Colonic mucosa (tissue), 4 donors: ENCODE measurements at regions of chr5 and their contacts with region 1.

Region 1: DNA sequence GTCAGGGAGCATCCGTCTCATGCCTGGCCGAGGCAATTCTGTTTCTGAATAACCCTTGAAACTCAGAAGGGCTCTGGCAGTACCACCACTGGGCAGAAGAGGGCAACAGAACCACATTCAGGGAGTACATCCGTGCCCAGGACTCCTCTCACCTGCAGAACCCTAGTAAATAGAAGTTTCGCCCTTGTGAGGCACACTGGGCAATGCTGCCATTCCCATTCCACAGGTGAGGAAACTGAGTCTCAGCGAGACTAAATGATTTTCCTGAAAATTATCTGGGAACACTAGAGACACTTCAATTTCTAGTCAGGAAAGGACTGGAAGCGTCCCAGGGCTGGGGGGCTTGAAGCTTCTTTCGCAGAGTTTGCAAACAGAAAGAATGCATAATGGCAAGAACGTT is 74.7 kb downstream of the FGF1 start:
- DNase-seq: peak; percentile 75
- H3K4me3 ChIP-seq: no peak overlapping the region
- H3K27ac ChIP-seq: no peak overlapping the region
- H3K4me1 ChIP-seq: no peaks in the 10 kb centered on the region
- H3K27me3 ChIP-seq: no peaks in the 10 kb centered on the region
- CTCF ChIP-seq: peak; percentile 79

Region 2: DNA sequence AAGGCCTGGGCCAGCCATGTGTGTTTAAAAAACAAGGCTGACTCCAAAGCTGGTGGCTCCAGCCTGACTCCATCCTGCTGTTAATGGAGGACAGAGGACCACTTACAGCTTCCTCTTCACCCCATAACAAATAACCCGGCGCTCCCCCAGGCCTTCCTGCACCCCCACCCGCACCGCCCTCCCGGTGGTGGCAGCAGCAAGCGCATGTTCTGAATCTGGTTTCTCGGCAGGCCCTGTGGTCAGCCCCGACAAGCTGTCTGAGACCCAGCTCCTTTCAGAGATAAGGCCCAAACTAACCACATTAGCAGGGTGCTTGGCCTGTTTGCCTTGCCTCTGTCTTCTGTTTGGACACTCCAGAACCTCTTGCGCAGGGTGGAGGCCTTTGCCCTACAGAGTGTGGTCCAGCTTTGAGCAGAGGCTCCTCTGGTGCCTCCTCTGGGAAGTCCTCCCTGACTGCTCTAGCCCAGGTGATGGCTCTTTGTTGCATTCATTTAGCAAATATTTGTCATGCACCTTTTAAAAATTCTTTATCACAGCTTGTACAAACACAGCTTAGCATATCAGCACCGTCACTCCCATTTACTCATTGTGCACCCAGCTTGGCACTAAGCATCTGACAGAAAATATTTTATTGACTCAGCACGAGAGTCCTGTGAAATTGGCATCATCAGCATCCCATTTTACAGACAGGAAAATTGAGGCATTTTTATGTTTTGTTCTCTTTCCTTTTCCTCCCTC is 424.1 kb before region 1 on chr5:
- intact Hi-C with region 1: no loop called
- DNase-seq: peak; percentile 62
- H3K4me3 ChIP-seq: no peak overlapping the region
- H3K27ac ChIP-seq: no peak overlapping the region
- H3K4me1 ChIP-seq: no peaks in the 10 kb centered on the region
- H3K27me3 ChIP-seq: no peaks in the 10 kb centered on the region
- CTCF ChIP-seq: no peak

Region 3: DNA sequence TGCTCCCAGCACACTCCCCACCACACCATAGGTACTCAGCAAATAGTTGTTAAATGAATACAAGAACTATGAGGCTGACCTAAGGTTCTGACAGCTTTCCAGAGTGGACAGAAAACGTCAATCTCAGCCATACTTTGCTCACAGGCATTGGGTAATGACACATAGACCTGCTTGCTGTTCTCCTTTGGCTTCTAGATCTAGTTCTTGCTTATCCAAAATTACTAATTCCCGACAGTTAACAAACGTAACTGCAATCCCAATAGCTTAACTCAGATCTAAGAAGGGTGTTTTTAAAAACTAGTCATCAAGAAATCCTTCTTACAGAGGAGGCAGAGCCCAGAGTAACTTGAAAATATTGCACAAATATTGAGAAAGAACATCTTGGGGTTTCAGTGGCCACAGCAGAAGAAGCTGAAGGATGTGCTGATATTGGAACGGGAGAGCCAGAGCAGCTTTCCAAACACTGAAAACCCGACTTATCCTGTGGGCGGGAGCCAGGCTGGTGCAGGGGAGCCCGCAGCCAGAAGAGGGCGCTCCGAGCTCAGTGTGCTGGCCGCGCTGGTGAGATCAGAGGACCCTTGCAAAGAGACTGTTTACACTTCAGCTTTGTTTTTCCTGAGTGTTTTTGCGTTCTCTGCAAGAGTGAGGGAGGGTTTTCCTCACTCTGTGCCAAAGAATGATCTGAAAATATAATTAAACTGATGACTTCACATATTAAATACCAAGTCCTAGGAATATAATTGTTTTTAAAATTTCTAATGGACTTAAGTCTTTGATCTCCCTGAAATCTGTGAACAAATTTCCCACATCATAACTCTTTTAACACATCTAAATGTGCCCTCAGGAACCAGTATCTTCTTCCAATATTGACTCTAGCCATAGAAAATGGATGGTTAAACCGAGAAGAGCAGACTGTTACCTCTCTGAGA is 44.4 kb after region 1 on chr5:
- intact Hi-C with region 1: loop called (anchors 2 kb)
- DNase-seq: peak; percentile 79
- H3K4me3 ChIP-seq: no peak overlapping the region
- H3K27ac ChIP-seq: no peak overlapping the region
- H3K4me1 ChIP-seq: peaks cover 3% of the 10 kb centered on the region
- H3K27me3 ChIP-seq: no peaks in the 10 kb centered on the region
- CTCF ChIP-seq: peak; percentile 98

Region 4: GRCh38 chr5:142748568-142749249 is 137.6 kb after region 1 on chr5:
- intact Hi-C with region 1: no loop called
- DNase-seq: peak; percentile 56
- H3K4me3 ChIP-seq: no peak overlapping the region
- H3K27ac ChIP-seq: no peak overlapping the region
- H3K4me1 ChIP-seq: no peaks in the 10 kb centered on the region
- H3K27me3 ChIP-seq: no peaks in the 10 kb centered on the region
- CTCF ChIP-seq: peak; percentile 44